Activated CD4-positive, alpha-beta memory T cell treated with anti-CD3 and anti-CD28 coated beads for 36 hours (primary cell): ENCODE measurements at regions of chr11 and their contacts with region 1.

Region 1: DNA sequence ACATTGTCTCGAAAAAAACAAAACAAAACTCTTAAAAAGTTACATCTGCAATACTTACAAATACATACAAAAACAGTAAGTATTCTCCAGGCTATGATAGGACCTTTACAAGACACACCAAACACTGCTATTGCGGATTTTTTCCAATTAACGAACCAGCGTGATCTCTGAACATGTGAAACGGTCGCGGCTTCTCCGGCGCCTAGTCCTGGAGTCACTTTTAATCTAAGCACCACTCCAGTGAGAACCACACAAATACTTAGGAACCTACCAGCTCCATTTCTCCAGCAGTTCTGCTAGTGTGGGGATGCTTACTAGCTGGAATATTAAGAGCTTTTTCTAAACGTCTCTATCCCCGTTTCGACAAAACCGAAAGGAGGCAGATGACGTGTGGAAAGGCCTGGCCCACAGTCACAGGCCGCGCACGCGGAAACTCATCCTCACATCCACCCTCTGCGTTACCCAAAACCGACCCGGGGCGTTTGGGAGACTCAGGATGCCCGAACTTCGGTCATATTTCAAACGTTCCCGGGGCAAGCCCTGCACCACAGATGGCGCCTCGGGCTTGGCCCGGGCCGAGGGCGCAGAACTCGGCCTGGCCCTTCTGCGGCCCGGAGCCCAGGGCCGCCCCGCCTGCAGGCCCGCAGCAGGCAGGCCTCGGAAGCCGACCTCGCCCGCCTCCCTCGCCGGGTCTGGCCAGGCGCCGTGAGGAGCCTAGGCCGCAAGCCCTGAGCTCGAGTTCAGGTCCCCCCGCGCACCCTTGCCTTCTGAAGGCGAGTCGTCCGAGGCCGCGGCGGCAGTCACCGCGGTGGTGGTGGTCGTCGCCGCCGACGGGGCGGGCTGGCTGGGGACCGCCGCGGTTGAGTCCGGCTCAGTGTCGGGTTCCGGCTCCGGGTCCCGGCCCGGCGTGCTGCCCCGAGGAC is 575 bp downstream of the FNBP4 start:
- DNase-seq: peak; percentile 88
- H3K4me3 Mint-ChIP-seq: peak overlapping the region; percentile 91
- H3K27ac Mint-ChIP-seq: peak overlapping the region; percentile 100
- H3K4me1 Mint-ChIP-seq: peaks cover 18% of the 10 kb centered on the region
- H3K27me3 Mint-ChIP-seq: no peaks in the 10 kb centered on the region

Region 2: DNA sequence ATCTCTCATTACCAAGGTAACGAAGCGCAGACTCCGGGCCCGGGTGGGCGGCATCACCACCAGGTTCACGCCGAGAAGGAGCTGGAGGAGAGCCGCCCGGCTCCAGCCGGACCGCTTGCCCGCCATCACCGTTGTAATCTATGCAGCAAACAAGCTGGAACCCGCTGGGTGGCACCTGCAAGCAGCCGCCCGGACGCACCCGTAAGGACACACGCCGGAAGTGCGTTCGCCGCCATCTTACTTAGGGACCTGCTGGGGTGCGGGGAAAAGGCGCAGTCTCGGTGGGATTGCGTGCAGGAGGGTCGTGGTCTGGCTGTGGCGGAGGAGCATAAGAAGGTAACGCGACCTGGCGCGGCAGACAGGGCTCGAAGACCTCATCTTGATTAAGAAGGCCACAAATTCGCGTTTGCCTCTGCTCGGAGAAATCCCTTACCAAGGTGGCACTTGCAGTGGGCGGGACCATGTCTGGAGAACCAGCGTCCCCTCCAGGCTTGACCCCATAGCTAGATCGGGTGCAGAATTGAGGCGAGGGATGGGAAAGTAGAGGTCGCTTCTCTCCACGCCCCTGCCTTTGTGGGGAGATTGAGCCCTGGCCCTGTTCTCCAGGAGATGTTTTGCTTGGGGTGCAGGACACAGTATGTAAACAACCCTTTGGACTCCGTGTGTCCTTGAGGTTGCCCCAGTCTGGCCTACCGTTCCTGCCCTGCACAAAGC is 517.7 kb before region 1 on chr11 and contains the start of gene ACP2:
- CTCF ChIA-PET with region 1: no interaction called
- POLR2A ChIA-PET with region 1: no interaction called
- intact Hi-C with region 1: loop called (anchors 2 kb)
- DNase-seq: peak; percentile 93
- H3K4me3 Mint-ChIP-seq: peak within 1 kb of the TSS; percentile 98
- H3K27ac Mint-ChIP-seq: peak within 1 kb of the TSS; percentile 95
- H3K4me1 Mint-ChIP-seq: peaks cover 20% of the 10 kb centered on the region
- H3K27me3 Mint-ChIP-seq: no peaks in the 10 kb centered on the region
- total RNA-seq, gene ACP2: 10.1 to 12.2 TPM

Region 3: GRCh38 chr11:47407746-47408590 is 358.6 kb before region 1 on chr11 and contains the start of gene SLC39A13:
- CTCF ChIA-PET with region 1: no interaction called
- POLR2A ChIA-PET with region 1: no interaction called
- intact Hi-C with region 1: no loop called
- DNase-seq: peak; percentile 95
- H3K4me3 Mint-ChIP-seq: peak within 1 kb of the TSS; percentile 86
- H3K27ac Mint-ChIP-seq: peak within 1 kb of the TSS; percentile 95
- H3K4me1 Mint-ChIP-seq: peaks cover 17% of the 10 kb centered on the region
- H3K27me3 Mint-ChIP-seq: no peaks in the 10 kb centered on the region
- total RNA-seq, gene SLC39A13: 17.7 to 18.0 TPM

Region 4: DNA sequence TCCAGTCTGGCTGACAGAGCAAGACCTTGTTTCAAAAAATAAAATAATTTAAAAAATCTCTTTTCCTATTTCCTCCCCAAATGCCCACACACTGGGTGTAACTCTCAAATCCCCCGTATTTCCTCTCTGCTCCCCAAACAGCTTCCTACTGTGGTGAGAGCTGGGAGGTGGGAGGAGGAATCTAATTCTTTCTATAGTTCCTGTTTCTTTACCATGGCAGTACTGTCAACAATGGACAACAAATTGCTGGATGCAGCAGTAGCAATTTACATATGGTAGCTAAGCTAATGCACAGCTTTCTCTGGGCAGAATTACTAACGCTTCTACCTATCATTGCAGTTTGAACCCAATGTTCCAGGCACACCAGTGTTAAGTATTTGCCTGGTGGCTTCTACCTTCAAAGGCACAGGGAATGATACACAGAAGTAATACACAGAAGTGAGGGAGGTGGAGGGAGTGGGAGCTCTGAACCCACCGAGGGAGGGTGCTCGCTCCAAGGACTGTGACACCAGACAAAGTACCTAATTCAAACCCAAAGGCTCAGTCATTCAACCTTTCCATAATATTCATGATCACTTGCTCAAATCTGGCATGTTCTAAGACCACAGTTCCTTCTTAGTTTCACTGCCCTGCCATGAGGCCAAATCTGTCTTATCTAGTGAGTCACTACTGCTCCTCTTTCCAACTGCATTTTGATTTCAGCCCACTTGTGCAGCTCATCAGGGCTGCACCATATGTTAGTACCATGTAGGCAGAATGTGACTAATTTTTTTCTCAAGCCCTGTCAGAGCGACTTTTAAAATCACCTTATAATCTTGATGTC is 251.5 kb before region 1 on chr11:
- CTCF ChIA-PET with region 1: no interaction called
- POLR2A ChIA-PET with region 1: no interaction called
- intact Hi-C with region 1: loop called (anchors 2 kb)
- DNase-seq: peak; percentile 73
- H3K4me3 Mint-ChIP-seq: peak overlapping the region; percentile 0
- H3K27ac Mint-ChIP-seq: peak overlapping the region; percentile 56
- H3K4me1 Mint-ChIP-seq: peaks cover 82% of the 10 kb centered on the region
- H3K27me3 Mint-ChIP-seq: no peaks in the 10 kb centered on the region

Region 5: GRCh38 chr11:47642099-47642855 is 124.3 kb before region 1 on chr11 and contains the start of gene MTCH2:
- CTCF ChIA-PET with region 1: no interaction called
- POLR2A ChIA-PET with region 1: interaction called, 3 read pairs
- intact Hi-C with region 1: loop called (anchors 1 kb)
- DNase-seq: peak; percentile 98
- H3K4me3 Mint-ChIP-seq: peak within 1 kb of the TSS; percentile 94
- H3K27ac Mint-ChIP-seq: peak within 1 kb of the TSS; percentile 89
- H3K4me1 Mint-ChIP-seq: peaks cover 20% of the 10 kb centered on the region
- H3K27me3 Mint-ChIP-seq: no peaks in the 10 kb centered on the region
- total RNA-seq, gene MTCH2: 110 to 117 TPM

Region 6: DNA sequence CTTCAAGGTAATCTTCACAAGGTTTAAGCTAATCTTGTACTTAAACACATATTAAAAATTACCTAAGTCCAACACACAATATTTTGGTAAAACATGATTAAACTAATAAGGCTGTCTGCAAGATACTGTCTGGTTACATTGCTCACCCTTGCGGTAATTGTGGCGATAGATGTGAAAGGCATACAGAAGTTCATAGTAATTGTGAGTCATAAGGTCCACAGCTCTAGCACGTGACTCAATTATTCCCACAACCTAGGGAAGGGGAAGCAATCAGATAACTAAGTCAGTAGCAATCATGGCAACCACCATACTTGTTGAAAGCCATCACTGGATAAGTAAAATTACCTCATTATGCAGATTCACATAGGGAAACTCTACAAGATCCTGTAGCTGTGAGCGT is 31.1 kb after region 1 on chr11:
- CTCF ChIA-PET with region 1: interaction called, 3 read pairs
- POLR2A ChIA-PET with region 1: interaction called, 3 read pairs
- intact Hi-C with region 1: loop called (anchors 1 kb)
- DNase-seq: peak; percentile 69
- H3K4me3 Mint-ChIP-seq: no peak overlapping the region
- H3K27ac Mint-ChIP-seq: peak overlapping the region; percentile 72
- H3K4me1 Mint-ChIP-seq: peaks cover 11% of the 10 kb centered on the region
- H3K27me3 Mint-ChIP-seq: no peaks in the 10 kb centered on the region

Region 7: GRCh38 chr11:47891886-47892285 is 125.3 kb after region 1 on chr11:
- CTCF ChIA-PET with region 1: no interaction called
- POLR2A ChIA-PET with region 1: no interaction called
- intact Hi-C with region 1: no loop called
- DNase-seq: no peak
- H3K4me3 Mint-ChIP-seq: no peak overlapping the region
- H3K27ac Mint-ChIP-seq: no peak overlapping the region
- H3K4me1 Mint-ChIP-seq: peaks cover 32% of the 10 kb centered on the region
- H3K27me3 Mint-ChIP-seq: no peaks in the 10 kb centered on the region